Endothelial cell of umbilical vein (primary cell): ENCODE measurements at regions of chr1 and their contacts with region 1.

Region 1: GRCh38 chr1:178031856-178032320 is 62.0 kb upstream of the RASAL2 start:
- DNase-seq: peak; percentile 84
- H3K4me3 ChIP-seq: no peak overlapping the region
- H3K27ac ChIP-seq: no peak overlapping the region
- H3K4me1 ChIP-seq: peaks cover 7% of the 10 kb centered on the region
- H3K27me3 ChIP-seq: no peaks in the 10 kb centered on the region
- CTCF ChIP-seq: peak; percentile 80 to 84
- POLR2A ChIP-seq: no peak

Region 2: GRCh38 chr1:178011465-178011828 is 20.4 kb before region 1 on chr1:
- CTCF ChIA-PET with region 1: interaction called, 20 read pairs
- POLR2A ChIA-PET with region 1: no interaction called
- dilution Hi-C with region 1: no loop called
- intact Hi-C with region 1: no loop called
- DNase-seq: peak; percentile 83
- H3K4me3 ChIP-seq: peak overlapping the region in 1 of 3 experiments; percentile 21
- H3K27ac ChIP-seq: peak overlapping the region; percentile 61
- H3K4me1 ChIP-seq: peaks cover 20% of the 10 kb centered on the region
- H3K27me3 ChIP-seq: no peaks in the 10 kb centered on the region
- CTCF ChIP-seq: no peak
- POLR2A ChIP-seq: no peak

Region 3: DNA sequence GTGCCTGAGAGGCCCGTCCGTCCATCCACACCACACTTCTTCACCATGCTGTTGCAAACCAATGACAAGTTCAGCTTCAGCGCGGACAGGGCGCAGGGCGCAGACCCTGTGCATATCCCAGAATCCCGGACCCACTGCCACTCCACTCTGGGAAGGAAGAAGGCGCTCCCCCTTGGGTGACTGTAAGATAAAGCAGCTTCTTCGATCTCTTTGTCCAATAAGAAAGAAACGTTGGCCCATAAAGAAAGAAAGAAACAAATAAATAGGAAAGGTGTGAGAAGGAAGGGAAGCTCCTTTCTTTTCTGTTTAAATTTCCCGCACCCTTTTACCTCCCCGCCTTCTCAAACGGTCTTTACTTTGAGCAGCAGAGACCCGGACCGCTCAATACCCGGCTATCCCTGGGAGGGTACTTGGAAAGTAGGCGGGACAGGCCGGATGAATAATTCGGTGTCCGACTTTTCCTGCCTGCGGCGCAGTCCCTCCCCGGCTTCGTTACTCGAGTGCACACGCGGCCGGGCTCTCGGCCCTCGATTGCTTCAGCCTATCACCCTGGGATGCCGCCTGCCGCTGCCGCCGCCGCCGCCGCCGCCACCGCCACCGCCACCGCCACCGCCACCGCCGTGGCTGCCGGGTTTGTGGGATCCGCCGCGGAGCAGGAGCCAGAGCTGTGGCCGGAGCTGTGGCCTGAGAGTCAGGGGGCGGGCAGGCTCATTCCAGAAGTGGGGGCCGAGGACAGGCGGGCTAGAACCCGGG is 61.5 kb after region 1 on chr1:
- CTCF ChIA-PET with region 1: interaction called, 58 read pairs
- POLR2A ChIA-PET with region 1: interaction called, 6 read pairs
- dilution Hi-C with region 1: no loop called
- intact Hi-C with region 1: loop called (anchors 1 kb)
- DNase-seq: peak; percentile 96
- H3K4me3 ChIP-seq: peak overlapping the region; percentile 48 to 93 (median 88)
- H3K27ac ChIP-seq: peak overlapping the region; percentile 68
- H3K4me1 ChIP-seq: peaks cover 25% of the 10 kb centered on the region
- H3K27me3 ChIP-seq: no peaks in the 10 kb centered on the region
- CTCF ChIP-seq: peak in 1 of 2 donors; percentile 10
- POLR2A ChIP-seq: peak; percentile 73

Region 4: DNA sequence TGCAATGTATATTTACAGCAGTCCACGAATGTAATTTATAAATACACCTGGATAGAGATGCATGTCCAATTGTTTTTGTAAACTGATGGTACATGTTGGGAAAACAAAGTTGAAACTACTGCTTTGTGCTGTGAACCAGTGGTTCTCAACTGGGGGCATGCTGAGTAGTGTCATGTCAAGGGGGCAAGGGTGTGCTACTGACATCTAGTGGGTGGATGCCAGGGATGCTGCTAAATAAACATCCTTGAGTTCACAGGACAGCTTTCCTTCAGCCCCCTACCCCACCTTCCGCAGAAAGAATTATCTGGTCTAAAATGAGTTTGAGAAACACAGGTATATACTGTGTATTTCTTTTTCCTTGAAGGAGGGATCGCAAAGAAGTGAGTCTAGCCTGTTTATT is 157.9 kb after region 1 on chr1:
- CTCF ChIA-PET with region 1: interaction called, 41 read pairs
- POLR2A ChIA-PET with region 1: interaction called, 3 read pairs
- dilution Hi-C with region 1: no loop called
- intact Hi-C with region 1: loop called (anchors 1 kb)
- DNase-seq: peak; percentile 48
- H3K4me3 ChIP-seq: no peak overlapping the region
- H3K27ac ChIP-seq: no peak overlapping the region
- H3K4me1 ChIP-seq: peaks cover 26% of the 10 kb centered on the region
- H3K27me3 ChIP-seq: no peaks in the 10 kb centered on the region
- CTCF ChIP-seq: peak; percentile 34 to 41
- POLR2A ChIP-seq: no peak

Region 5: DNA sequence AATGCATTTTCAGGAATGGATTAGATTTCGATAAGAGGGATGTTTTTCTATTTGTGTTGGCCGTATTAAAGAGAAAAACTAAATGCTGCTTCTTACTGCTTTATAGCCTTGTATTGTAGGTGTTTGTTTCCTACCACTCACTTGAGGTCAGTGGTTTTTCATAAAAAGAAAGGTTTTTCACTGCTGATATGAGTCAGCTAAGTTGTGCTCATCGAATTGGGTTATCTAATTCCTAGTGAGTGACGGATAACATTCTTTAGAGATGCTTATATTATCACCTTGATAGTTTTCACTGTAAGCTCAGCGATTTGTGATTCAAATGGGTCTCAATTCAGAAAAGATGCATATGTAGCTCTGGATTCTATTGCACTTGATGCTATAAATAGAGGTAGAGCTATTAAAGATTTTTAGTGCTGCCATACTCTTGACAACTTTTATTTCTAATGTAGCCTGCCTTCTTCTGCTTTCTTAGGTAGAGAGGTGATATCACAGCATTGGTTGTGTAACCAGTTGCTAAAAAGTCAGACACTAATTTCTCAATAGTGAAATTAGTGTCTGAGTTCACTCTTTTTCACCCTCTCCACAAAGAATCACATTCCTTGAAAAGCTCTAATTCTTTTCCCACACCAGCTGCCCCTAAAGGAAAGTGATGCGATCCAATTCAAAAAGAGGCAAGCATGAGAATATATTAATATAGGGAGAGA is 242.0 kb after region 1 on chr1:
- CTCF ChIA-PET with region 1: interaction called, 23 read pairs
- POLR2A ChIA-PET with region 1: no interaction called
- dilution Hi-C with region 1: no loop called
- intact Hi-C with region 1: no loop called
- DNase-seq: no peak
- H3K4me3 ChIP-seq: no peak overlapping the region
- H3K27ac ChIP-seq: no peak overlapping the region
- H3K4me1 ChIP-seq: peaks cover 14% of the 10 kb centered on the region
- H3K27me3 ChIP-seq: no peaks in the 10 kb centered on the region
- CTCF ChIP-seq: no peak
- POLR2A ChIP-seq: no peak

Region 6: GRCh38 chr1:178501705-178502329 is 469.9 kb after region 1 on chr1:
- CTCF ChIA-PET with region 1: interaction called, 4 read pairs
- POLR2A ChIA-PET with region 1: no interaction called
- dilution Hi-C with region 1: no loop called
- intact Hi-C with region 1: loop called (anchors 1 kb)
- DNase-seq: peak; percentile 68
- H3K4me3 ChIP-seq: no peak overlapping the region
- H3K27ac ChIP-seq: no peak overlapping the region
- H3K4me1 ChIP-seq: no peaks in the 10 kb centered on the region
- H3K27me3 ChIP-seq: no peaks in the 10 kb centered on the region
- CTCF ChIP-seq: peak; percentile 92 to 96
- POLR2A ChIP-seq: no peak